CD8-positive, alpha-beta memory T cell (primary cell): ENCODE measurements at regions of chr1 and their contacts with region 1.

Region 1: GRCh38 chr1:151839457-151840405 is at the start of gene C2CD4D:
- DNase-seq: peak; percentile 59 to 77 (median 69)
- H3K4me3 ChIP-seq: peak within 1 kb of the TSS; percentile 74
- H3K4me3 Mint-ChIP-seq: peak within 1 kb of the TSS; percentile 81 to 96 (median 87)
- H3K27ac ChIP-seq: peak within 1 kb of the TSS; percentile 67
- H3K27ac Mint-ChIP-seq: peak within 1 kb of the TSS; percentile 67 to 94 (median 91)
- H3K4me1 ChIP-seq: peaks cover 36% of the 10 kb centered on the region
- H3K4me1 Mint-ChIP-seq: peaks cover 45 to 60% (median 47%) of the 10 kb centered on the region in 3 donors
- H3K27me3 ChIP-seq: no peaks in the 10 kb centered on the region
- H3K27me3 Mint-ChIP-seq: peaks cover 0 to 1% of the 10 kb centered on the region in 2 donors
- total RNA-seq, gene C2CD4D: 1.9 to 2.0 TPM

Region 2: DNA sequence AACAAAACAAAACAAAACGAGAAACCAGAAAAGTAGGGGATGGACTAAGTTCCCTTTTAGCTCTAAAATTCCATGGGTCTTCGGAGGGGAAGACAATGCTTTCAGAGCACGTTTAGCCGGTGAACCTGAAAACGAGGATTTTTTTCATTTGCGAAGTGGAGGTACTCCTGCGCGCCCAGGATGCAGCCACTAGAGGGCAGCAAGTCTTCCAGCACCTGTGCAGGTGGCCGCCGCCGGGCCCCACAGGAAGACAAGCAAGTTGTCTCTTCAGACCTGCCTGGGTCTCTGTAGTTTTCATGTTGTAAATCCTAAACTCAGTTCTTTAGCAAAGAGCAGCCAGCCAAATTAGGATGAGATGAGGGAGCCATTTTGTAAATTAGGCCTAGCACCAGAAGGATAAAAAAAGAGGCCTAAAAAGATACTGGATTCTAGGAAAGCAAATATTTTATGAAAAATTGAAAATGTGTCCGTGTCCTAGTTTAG is 245.5 kb before region 1 on chr1:
- CTCF ChIA-PET with region 1: interaction called, 16 read pairs
- POLR2A ChIA-PET with region 1: no interaction called
- DNase-seq: peak; percentile 76 to 89 (median 79)
- H3K4me3 ChIP-seq: peak overlapping the region; percentile 17
- H3K4me3 Mint-ChIP-seq: peak overlapping the region in 5 of 7 donors; percentile 4 to 70 (median 51)
- H3K27ac ChIP-seq: no peak overlapping the region
- H3K27ac Mint-ChIP-seq: peak overlapping the region in 5 of 8 donors; percentile 30 to 90 (median 48)
- H3K4me1 ChIP-seq: peaks cover 5% of the 10 kb centered on the region
- H3K4me1 Mint-ChIP-seq: peaks cover 5 to 11% (median 11%) of the 10 kb centered on the region in 3 donors
- H3K27me3 ChIP-seq: no peaks in the 10 kb centered on the region
- H3K27me3 Mint-ChIP-seq: peaks cover 4 to 29% of the 10 kb centered on the region in 2 donors

Region 3: DNA sequence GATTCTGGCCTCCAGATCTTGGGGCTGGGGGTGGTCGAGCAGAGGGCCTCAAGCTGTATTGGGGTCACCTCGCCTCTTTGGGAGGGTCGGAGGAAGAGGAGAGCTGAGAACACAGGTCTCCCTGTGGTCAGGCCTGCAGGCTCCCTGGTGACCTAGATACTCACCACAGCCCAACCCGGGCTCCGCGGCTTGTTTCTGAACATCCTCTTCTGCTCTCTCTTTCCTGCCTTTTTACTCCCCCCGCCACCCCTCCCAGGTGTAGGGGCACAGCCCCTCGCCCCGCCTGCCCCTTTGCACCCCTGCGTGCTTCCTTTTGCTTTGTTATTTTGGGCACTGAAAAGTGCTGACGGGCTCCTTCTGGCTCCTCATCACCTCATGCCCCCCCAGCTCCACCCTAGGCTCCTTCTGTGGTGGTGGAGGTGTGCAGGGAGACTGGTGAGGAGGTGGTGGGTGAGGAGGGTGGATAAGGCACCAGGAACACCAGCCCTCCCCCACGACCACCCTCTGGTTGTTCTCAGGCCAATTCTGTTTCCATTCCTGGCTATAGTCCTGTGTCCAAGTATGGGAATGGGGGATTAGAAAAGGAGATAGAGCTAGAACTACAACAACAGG is 23.9 kb before region 1 on chr1:
- CTCF ChIA-PET with region 1: interaction called, 12 read pairs
- POLR2A ChIA-PET with region 1: no interaction called
- DNase-seq: peak; percentile 37 to 75 (median 74)
- H3K4me3 ChIP-seq: peak overlapping the region; percentile 9
- H3K4me3 Mint-ChIP-seq: peak overlapping the region; percentile 45 to 97 (median 74)
- H3K27ac ChIP-seq: no peak overlapping the region
- H3K27ac Mint-ChIP-seq: peak overlapping the region; percentile 56 to 98 (median 92)
- H3K4me1 ChIP-seq: peaks cover 51% of the 10 kb centered on the region
- H3K4me1 Mint-ChIP-seq: peaks cover 72 to 90% (median 79%) of the 10 kb centered on the region in 3 donors
- H3K27me3 ChIP-seq: no peaks in the 10 kb centered on the region
- H3K27me3 Mint-ChIP-seq: no peaks in the 10 kb centered on the region

Region 4: GRCh38 chr1:151820940-151821339 is 18.8 kb before region 1 on chr1:
- CTCF ChIA-PET with region 1: interaction called, 12 read pairs
- POLR2A ChIA-PET with region 1: no interaction called
- DNase-seq: peak in 1 of 5 donors; percentile 24
- H3K4me3 ChIP-seq: no peak overlapping the region
- H3K4me3 Mint-ChIP-seq: peak overlapping the region in 6 of 7 donors; percentile 71 to 97 (median 86)
- H3K27ac ChIP-seq: no peak overlapping the region
- H3K27ac Mint-ChIP-seq: peak overlapping the region; percentile 16 to 98 (median 90)
- H3K4me1 ChIP-seq: peaks cover 44% of the 10 kb centered on the region
- H3K4me1 Mint-ChIP-seq: peaks cover 59 to 68% (median 66%) of the 10 kb centered on the region in 3 donors
- H3K27me3 ChIP-seq: no peaks in the 10 kb centered on the region
- H3K27me3 Mint-ChIP-seq: no peaks in the 10 kb centered on the region

Region 5: GRCh38 chr1:152061952-152062351 is 222.2 kb after region 1 on chr1:
- CTCF ChIA-PET with region 1: no interaction called
- POLR2A ChIA-PET with region 1: no interaction called
- DNase-seq: no peak
- H3K4me3 ChIP-seq: no peak overlapping the region
- H3K4me3 Mint-ChIP-seq: no peak overlapping the region
- H3K27ac ChIP-seq: no peak overlapping the region
- H3K27ac Mint-ChIP-seq: no peak overlapping the region
- H3K4me1 ChIP-seq: no peaks in the 10 kb centered on the region
- H3K4me1 Mint-ChIP-seq: no peaks in the 10 kb centered on the region
- H3K27me3 ChIP-seq: peaks cover 10% of the 10 kb centered on the region
- H3K27me3 Mint-ChIP-seq: peaks cover 11 to 30% of the 10 kb centered on the region in 2 donors